T-cell (primary cell): ENCODE measurements at regions of chr9 and their contacts with region 1.

Region 1: DNA sequence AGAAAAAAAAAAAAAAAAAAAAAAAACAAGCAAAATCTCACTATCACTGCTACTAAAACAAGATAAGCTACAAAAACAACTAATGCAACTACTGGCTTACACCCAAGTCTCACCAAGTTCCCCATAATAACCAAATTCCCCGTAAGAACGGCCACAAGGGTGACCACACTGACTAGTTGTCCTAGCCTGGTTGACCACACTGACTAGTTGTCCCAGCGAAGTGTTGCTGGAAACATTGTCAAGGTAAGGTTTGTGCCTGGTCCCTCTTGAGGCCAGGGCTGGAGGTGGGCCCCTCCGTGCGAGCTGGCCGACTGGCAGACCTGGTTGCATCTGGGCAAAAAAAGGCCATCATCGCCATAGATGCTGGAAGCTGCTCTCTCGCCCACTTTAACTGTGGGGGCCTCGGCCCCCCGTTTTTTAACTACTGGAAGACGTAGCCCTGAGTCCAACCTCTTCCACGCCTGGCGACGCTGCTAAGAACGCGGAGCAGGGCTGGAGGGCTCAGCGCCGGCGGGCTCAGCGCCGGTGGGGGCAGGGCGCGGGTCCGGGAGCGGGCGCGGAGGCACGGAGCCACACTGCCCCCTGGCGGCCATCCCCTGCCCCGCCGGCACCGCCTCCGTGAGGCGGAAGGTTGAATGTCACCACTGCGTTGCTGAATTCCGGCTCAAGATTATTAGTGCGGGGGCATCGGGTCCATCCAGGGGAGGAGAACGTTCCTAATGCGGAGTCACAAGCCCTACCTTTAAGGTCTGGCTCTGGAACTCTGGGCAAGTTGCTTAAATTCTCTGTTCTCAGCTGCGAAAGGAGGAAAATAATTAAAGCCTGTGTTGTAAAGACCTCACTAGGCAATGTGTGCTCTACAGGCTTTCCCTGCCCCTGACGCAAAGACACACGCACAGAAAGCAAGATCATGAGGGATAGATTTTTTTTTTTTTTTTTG is 84.0 kb downstream of the HSD17B3 start:
- DNase-seq: peak; percentile 12 to 85 (median 61)
- ATAC-seq: peak; percentile 80 to 88 (median 85)
- H3K4me3 ChIP-seq: peak overlapping the region; percentile 24 to 58
- H3K4me3 Mint-ChIP-seq: peak overlapping the region; percentile 65 to 75 (median 65)
- H3K27ac ChIP-seq: no peak overlapping the region
- H3K27ac Mint-ChIP-seq: peak overlapping the region in 1 of 2 donors; percentile 69
- H3K4me1 ChIP-seq: peaks cover 0 to 23% of the 10 kb centered on the region in 2 experiments
- H3K4me1 Mint-ChIP-seq: peaks cover 7 to 17% (median 14%) of the 10 kb centered on the region in 3 donors
- H3K27me3 ChIP-seq: peaks cover 2 to 56% of the 10 kb centered on the region in 2 experiments
- H3K27me3 Mint-ChIP-seq: peaks cover 40 to 60% of the 10 kb centered on the region in 2 donors

Region 2: GRCh38 chr9:94736759-94737158 is 1481.3 kb before region 1 on chr9:
- CTCF ChIA-PET with region 1: no interaction called
- POLR2A ChIA-PET with region 1: interaction called in 1 of 2 experiments, 10 read pairs
- DNase-seq: no peak
- ATAC-seq: no peak
- H3K4me3 ChIP-seq: no peak overlapping the region
- H3K4me3 Mint-ChIP-seq: no peak overlapping the region
- H3K27ac ChIP-seq: no peak overlapping the region
- H3K27ac Mint-ChIP-seq: no peak overlapping the region
- H3K4me1 ChIP-seq: no peaks in the 10 kb centered on the region
- H3K4me1 Mint-ChIP-seq: peaks cover 0 to 9% (median 4%) of the 10 kb centered on the region in 3 donors
- H3K27me3 ChIP-seq: no peaks in the 10 kb centered on the region
- H3K27me3 Mint-ChIP-seq: no peaks in the 10 kb centered on the region

Region 3: GRCh38 chr9:96367943-96368342 is 149.9 kb after region 1 on chr9:
- CTCF ChIA-PET with region 1: no interaction called
- POLR2A ChIA-PET with region 1: no interaction called
- DNase-seq: no peak
- ATAC-seq: no peak
- H3K4me3 ChIP-seq: no peak overlapping the region
- H3K4me3 Mint-ChIP-seq: no peak overlapping the region
- H3K27ac ChIP-seq: no peak overlapping the region
- H3K27ac Mint-ChIP-seq: no peak overlapping the region
- H3K4me1 ChIP-seq: no peaks in the 10 kb centered on the region
- H3K4me1 Mint-ChIP-seq: peaks cover 0 to 2% (median 0%) of the 10 kb centered on the region in 3 donors
- H3K27me3 ChIP-seq: no peaks in the 10 kb centered on the region
- H3K27me3 Mint-ChIP-seq: no peaks in the 10 kb centered on the region

Region 4: GRCh38 chr9:96566498-96567207 is 348.6 kb after region 1 on chr9:
- CTCF ChIA-PET with region 1: interaction called in 1 of 2 experiments, 10 read pairs
- POLR2A ChIA-PET with region 1: no interaction called
- DNase-seq: peak; percentile 54 to 89 (median 72)
- ATAC-seq: peak; percentile 86 to 93 (median 90)
- H3K4me3 ChIP-seq: peak overlapping the region; percentile 84
- H3K4me3 Mint-ChIP-seq: peak overlapping the region; percentile 81 to 87 (median 82)
- H3K27ac ChIP-seq: peak overlapping the region; percentile 96
- H3K27ac Mint-ChIP-seq: peak overlapping the region; percentile 83 to 86
- H3K4me1 ChIP-seq: peaks cover 3 to 9% of the 10 kb centered on the region in 2 experiments
- H3K4me1 Mint-ChIP-seq: peaks cover 26 to 29% (median 28%) of the 10 kb centered on the region in 3 donors
- H3K27me3 ChIP-seq: peaks cover 0 to under 1% of the 10 kb centered on the region in 2 experiments
- H3K27me3 Mint-ChIP-seq: peaks cover 0 to 9% of the 10 kb centered on the region in 2 donors